ENCODE measurements at regions of chr10 and their contacts with region 1.

Region 1: DNA sequence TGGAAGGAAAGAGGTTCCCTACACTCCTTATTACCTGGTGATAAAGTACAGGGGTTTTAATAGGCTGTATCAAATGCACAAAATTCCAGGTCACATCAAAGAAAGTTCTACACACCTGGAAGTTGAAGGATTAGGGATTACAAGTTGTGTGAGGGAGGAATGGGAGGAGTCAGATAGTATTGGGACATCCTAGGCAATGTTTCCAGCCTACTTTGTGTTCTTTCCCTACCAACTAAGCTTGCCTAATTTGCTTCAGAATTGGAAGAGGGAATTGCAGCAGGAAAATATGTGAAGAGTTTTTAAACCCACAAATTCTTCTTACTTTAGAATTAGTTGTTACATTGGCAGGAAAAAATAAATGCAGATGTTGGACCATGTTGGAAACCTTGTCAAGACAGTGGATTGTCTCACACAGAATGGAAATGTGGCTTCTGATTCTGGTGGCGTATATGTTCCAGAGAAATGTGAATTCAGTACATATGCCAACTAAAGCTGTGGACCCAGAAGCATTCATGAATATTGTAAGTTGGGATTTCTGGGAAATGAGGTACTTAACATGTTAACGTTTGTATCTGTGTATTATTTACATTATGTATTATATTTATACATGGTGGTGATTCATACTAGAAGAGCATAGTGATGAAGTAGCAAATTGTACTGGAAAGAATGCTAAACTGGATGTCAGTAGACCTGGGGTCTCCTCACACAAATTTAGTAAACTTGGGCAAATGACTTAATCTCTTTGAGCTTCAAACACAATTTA is at the start of gene LIPM:
- DNase-seq: no peak
- ATAC-seq: no peak
- H3K4me3 ChIP-seq: no peak within 1 kb of the TSS
- H3K27ac ChIP-seq: no peak within 1 kb of the TSS
- H3K4me1 ChIP-seq: no peaks in the 10 kb centered on the region
- H3K27me3 ChIP-seq: no peaks in the 10 kb centered on the region
- CTCF ChIP-seq: no peak
- total RNA-seq, gene LIPM: not detected

Region 2: GRCh38 chr10:88670497-88670896 is 132.2 kb before region 1 on chr10:
- CTCF ChIA-PET with region 1: no interaction called
- POLR2A ChIA-PET with region 1: interaction called, 11 read pairs
- in situ Hi-C with region 1: no loop called
- intact Hi-C with region 1: no loop called
- DNase-seq: no peak
- ATAC-seq: no peak
- H3K4me3 ChIP-seq: no peak overlapping the region
- H3K27ac ChIP-seq: no peak overlapping the region
- H3K4me1 ChIP-seq: no peaks in the 10 kb centered on the region
- H3K27me3 ChIP-seq: no peaks in the 10 kb centered on the region
- CTCF ChIP-seq: no peak

Measured in Panc1 (cell line).